Stomach (tissue), 19 donors: ENCODE measurements at regions of chr2 and their contacts with region 1.

Region 1: DNA sequence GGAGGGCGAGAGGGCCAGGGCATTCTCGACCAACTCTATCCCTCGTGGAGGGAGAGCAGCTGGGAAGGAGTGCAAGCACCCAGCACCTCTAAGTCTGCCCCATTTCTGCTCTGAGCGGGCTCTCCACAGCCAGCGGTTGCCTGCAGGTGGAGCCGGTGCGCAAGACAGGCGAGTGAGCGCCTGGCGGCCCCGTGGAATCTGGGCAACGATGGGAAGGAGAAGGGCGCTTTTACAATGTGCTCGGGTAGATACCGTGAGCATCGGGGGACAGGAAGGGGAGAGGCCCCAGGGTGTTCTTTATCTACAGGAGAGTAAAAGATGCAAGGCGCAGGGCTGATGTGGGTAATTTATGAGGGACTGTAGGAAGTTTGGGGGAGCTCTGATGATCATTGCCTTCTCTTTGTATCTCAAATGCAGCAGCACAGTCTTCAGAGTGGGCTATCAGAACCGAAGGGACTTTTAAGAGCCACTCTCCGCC is 867 bp upstream of the TTL start:
- DNase-seq: peak; percentile 84 to 94
- H3K4me3 ChIP-seq: peak overlapping the region; percentile 83 to 97 (median 90)
- H3K27ac ChIP-seq: peak overlapping the region; percentile 83 to 93 (median 89)
- H3K4me1 ChIP-seq: peaks cover 9 to 32% (median 27%) of the 10 kb centered on the region in 4 donors
- H3K27me3 ChIP-seq: no peaks in the 10 kb centered on the region
- CTCF ChIP-seq: peak in 5 of 7 experiments; percentile 59 to 67 (median 62)
- EP300 ChIP-seq: no peak
- POLR2A ChIP-seq: no peak

Region 2: DNA sequence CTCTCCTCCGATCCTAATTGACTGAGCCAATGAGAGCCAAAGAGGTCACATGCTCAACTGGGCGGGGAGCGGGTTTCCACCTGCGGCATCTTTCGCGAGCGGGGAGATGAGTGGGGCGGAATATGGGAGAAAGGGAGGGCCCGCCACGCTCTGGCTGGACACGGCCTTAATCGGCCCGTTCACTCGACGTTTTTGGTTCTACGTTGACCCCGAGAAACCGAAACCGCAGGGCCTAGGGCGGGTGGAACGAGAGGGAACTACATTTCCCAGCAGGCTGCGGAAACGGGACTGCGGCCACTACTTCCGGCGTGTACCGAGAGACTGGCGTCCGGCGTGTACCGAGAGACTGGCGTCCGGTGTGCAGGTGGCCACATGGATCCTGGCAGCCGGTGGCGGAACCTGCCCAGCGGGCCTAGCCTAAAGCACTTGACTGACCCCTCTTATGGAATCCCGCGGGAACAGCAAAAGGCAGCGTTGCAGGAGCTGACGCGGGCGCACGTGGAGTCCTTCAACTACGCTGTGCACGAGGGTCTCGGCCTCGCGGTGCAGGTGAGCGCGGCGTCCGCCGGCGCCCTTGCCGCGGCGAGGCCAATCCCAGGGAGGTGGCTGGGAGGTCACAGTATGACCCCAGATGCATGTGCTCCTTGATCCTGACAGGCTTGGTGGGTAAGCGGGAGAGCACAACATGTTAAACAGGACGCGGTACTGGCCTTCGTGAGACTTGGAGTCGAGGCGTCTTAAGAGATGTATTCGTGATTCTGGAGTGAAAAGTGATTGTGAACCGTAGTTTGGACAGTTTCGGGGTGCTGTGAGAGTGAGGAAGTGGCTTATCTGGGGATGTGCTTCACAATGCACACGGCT is 61.3 kb after region 1 on chr2 and contains the start of gene POLR1B:
- intact Hi-C with region 1: loop called (anchors 10 kb)
- DNase-seq: peak; percentile 85 to 96
- H3K4me3 ChIP-seq: peak within 1 kb of the TSS; percentile 77 to 97 (median 89)
- H3K27ac ChIP-seq: peak within 1 kb of the TSS; percentile 83 to 90 (median 89)
- H3K4me1 ChIP-seq: peaks cover 8 to 32% (median 23%) of the 10 kb centered on the region in 4 donors
- H3K27me3 ChIP-seq: no peaks in the 10 kb centered on the region
- CTCF ChIP-seq: no peak
- EP300 ChIP-seq: no peak
- POLR2A ChIP-seq: no peak
- total RNA-seq, gene POLR1B: 10.4 to 42.9 (median 16.9) TPM